Mammary epithelial cell (primary cell): ENCODE measurements at regions of chr4 and their contacts with region 1.

Region 1: GRCh38 chr4:89898304-89898716 is 3.7 kb downstream of the MMRN1 start:
- DNase-seq: no peak
- H3K4me3 ChIP-seq: no peak overlapping the region
- H3K27ac ChIP-seq: no peak overlapping the region
- H3K4me1 ChIP-seq: no peaks in the 10 kb centered on the region
- H3K27me3 ChIP-seq: peaks cover 5% of the 10 kb centered on the region
- CTCF ChIP-seq: no peak

Region 2: GRCh38 chr4:89226665-89227574 is 671.4 kb before region 1 on chr4:
- CTCF ChIA-PET with region 1: no interaction called
- dilution Hi-C with region 1: no loop called
- in situ Hi-C with region 1: no loop called
- intact Hi-C with region 1: loop called (anchors 1 kb)
- DNase-seq: peak; percentile 82
- H3K4me3 ChIP-seq: peak overlapping the region; percentile 4 to 24 (median 5)
- H3K27ac ChIP-seq: peak overlapping the region; percentile 38
- H3K4me1 ChIP-seq: no peaks in the 10 kb centered on the region
- H3K27me3 ChIP-seq: no peaks in the 10 kb centered on the region
- CTCF ChIP-seq: peak; percentile 82 to 84

Region 3: DNA sequence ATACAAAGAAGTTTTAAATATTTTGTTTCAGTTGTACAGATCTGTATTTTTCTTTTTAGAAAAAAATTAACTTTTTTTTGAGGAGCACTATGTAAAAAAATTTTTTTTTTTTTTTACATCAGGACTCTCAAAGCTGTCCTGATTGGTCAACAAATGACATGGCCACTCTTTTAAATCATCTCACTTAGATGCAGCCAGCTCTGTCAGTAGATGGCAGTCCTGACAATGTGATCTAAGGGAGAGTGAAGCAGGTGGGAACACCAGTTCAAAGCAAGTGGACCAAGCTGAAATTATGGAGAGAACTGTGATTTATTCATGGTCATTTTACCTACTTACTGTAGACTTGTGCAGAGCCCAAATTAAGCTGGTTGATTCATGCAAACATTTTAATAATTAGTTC is 416.1 kb before region 1 on chr4:
- CTCF ChIA-PET with region 1: no interaction called
- dilution Hi-C with region 1: no loop called
- in situ Hi-C with region 1: no loop called
- intact Hi-C with region 1: loop called (anchors 2 kb)
- DNase-seq: peak; percentile 39
- H3K4me3 ChIP-seq: no peak overlapping the region
- H3K27ac ChIP-seq: no peak overlapping the region
- H3K4me1 ChIP-seq: no peaks in the 10 kb centered on the region
- H3K27me3 ChIP-seq: no peaks in the 10 kb centered on the region
- CTCF ChIP-seq: peak; percentile 34 to 49

Region 4: GRCh38 chr4:89598602-89599001 is 299.7 kb before region 1 on chr4:
- CTCF ChIA-PET with region 1: no interaction called
- dilution Hi-C with region 1: no loop called
- in situ Hi-C with region 1: no loop called
- intact Hi-C with region 1: loop called (anchors 2 kb)
- DNase-seq: peak; percentile 11
- H3K4me3 ChIP-seq: no peak overlapping the region
- H3K27ac ChIP-seq: no peak overlapping the region
- H3K4me1 ChIP-seq: no peaks in the 10 kb centered on the region
- H3K27me3 ChIP-seq: no peaks in the 10 kb centered on the region
- CTCF ChIP-seq: peak; percentile 46 to 55

Region 5: DNA sequence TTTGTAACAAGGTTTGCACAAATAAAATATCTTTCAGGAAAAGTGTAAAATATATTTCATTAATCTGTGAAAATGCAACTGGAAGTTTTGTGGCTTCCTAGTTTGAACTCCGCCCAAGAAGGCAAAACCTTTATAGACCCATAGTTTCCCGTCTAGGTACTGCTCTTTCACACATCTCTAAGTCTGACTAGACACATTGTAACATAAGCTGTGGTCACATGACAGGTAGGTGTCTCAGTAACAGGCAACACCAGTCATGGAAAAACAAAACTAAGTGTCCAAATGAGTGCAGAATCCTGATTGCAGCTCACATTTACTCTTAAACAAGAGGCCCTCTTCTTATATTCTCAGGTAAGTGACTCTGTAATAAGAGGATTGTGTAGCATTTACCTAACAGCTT is 117.0 kb before region 1 on chr4:
- CTCF ChIA-PET with region 1: no interaction called
- dilution Hi-C with region 1: no loop called
- in situ Hi-C with region 1: no loop called
- intact Hi-C with region 1: no loop called
- DNase-seq: peak; percentile 24
- H3K4me3 ChIP-seq: no peak overlapping the region
- H3K27ac ChIP-seq: no peak overlapping the region
- H3K4me1 ChIP-seq: no peaks in the 10 kb centered on the region
- H3K27me3 ChIP-seq: no peaks in the 10 kb centered on the region
- CTCF ChIP-seq: no peak

Region 6: GRCh38 chr4:89929425-89930159 is 31.3 kb after region 1 on chr4:
- CTCF ChIA-PET with region 1: no interaction called
- dilution Hi-C with region 1: no loop called
- in situ Hi-C with region 1: no loop called
- intact Hi-C with region 1: no loop called
- DNase-seq: no peak
- H3K4me3 ChIP-seq: no peak overlapping the region
- H3K27ac ChIP-seq: no peak overlapping the region
- H3K4me1 ChIP-seq: no peaks in the 10 kb centered on the region
- H3K27me3 ChIP-seq: peaks cover 2% of the 10 kb centered on the region
- CTCF ChIP-seq: no peak

Region 7: DNA sequence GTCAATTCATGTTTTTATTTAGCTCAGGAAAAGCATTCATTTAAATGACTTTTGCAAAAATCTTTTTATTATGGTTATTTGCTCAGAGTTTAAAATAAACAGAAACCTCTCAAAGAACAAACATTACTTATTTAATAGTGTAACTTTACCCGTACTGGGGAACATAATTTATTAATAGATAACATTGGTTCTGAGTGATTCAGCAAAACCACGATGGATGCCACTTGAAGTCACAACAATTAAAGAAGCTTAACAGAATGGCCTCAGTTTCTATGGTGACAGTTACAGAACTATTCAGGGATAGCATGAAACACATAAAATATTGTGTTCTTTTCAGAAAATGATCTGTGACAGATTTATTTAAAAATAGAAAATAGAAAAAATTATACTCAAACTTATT is 597.6 kb after region 1 on chr4:
- CTCF ChIA-PET with region 1: no interaction called
- dilution Hi-C with region 1: no loop called
- in situ Hi-C with region 1: no loop called
- intact Hi-C with region 1: no loop called
- DNase-seq: no peak
- H3K4me3 ChIP-seq: no peak overlapping the region
- H3K27ac ChIP-seq: no peak overlapping the region
- H3K4me1 ChIP-seq: no peaks in the 10 kb centered on the region
- H3K27me3 ChIP-seq: no peaks in the 10 kb centered on the region
- CTCF ChIP-seq: no peak